ENCODE measurements at regions of chr2 and their contacts with region 1.

Region 1: DNA sequence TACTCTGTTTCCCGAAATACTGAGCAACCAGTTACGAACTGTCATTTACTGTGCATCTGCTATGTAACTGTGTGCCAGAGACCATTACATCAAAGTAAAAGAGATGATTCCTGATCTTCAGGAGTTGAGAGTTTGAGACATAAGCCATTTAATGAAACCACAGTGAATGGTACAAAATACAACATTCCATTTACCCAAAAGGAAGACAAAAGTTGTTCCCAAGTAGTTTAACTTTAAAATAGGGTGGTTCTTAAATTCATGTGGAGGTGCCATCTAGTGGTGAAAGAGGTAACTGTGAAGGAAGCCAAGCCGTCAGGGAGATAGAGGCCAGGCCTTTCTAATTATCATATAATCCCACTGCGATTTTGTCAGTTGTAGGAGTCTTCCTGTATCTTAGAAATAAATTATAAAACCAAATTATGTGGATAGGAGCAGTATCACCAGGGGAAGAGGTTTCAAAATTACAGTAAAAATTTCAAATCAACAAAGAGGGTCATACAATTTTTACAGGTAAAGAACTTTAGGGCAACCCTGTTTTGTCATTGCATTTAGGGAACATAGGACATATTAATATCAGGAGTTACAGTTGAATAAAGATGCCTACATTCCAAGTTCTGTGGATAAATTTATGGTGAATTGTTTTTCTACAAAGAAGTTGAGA is 67.7 kb downstream of the EPAS1 start:
- DNase-seq: peak; percentile 27 to 32
- H3K4me3 ChIP-seq: no peak overlapping the region
- H3K27ac ChIP-seq: no peak overlapping the region
- H3K4me1 ChIP-seq: peaks cover 0 to 2% of the 10 kb centered on the region in 2 donors
- H3K27me3 ChIP-seq: no peaks in the 10 kb centered on the region
- CTCF ChIP-seq: peak; percentile 45 to 80 (median 76)
- POLR2A ChIP-seq: no peak

Region 2: GRCh38 chr2:46010925-46011490 is 353.9 kb before region 1 on chr2:
- intact Hi-C with region 1: loop called (anchors 10 kb)
- DNase-seq: no peak
- H3K4me3 ChIP-seq: no peak overlapping the region
- H3K27ac ChIP-seq: no peak overlapping the region
- H3K4me1 ChIP-seq: peaks cover 16 to 29% of the 10 kb centered on the region in 2 donors
- H3K27me3 ChIP-seq: no peaks in the 10 kb centered on the region
- CTCF ChIP-seq: peak; percentile 14 to 76 (median 57)
- POLR2A ChIP-seq: no peak

Region 3: DNA sequence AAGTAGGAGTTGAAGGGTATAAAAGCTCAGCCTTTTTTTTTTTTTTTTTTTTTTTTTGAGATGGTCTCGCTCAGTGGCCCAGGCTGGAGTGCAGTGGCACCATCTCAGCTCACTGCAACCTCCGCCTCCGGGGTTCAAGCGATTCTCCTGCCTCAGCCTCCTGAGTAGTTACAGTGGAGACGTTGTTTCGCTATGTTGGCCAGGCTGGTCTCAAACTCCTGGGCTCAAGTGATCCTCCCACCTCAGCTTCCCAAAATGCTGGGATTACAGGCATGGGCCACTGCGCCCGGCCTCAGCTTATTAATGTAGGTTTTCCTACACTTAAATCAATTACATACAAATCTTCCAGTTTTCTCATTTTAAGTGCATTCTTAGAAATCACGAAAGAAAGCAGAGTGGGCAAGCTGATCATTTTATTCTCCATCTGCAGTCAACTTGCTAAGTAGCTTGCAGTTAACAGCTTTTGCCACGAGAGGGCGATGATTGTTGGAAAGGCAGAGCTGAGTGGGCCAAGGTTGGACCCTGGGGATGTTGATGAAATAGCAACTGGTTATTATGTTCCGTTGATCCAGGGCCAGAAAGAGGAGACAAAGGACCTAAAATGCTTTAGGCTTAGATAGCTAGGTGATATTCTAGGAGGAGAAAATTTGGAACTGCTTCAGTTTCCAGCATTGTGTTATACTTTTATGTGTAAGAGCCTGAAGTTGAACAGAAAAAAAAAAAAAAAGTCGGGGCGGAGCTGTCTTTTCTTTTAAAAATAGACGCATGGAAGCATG is 302.1 kb before region 1 on chr2:
- intact Hi-C with region 1: loop called (anchors 5 kb)
- DNase-seq: peak; percentile 80 to 84
- H3K4me3 ChIP-seq: no peak overlapping the region
- H3K27ac ChIP-seq: peak overlapping the region in 1 of 3 donors; percentile 44
- H3K4me1 ChIP-seq: peaks cover 10 to 11% of the 10 kb centered on the region in 2 donors
- H3K27me3 ChIP-seq: no peaks in the 10 kb centered on the region
- CTCF ChIP-seq: peak; percentile 65 to 90 (median 80)
- POLR2A ChIP-seq: no peak

Region 4: GRCh38 chr2:46296840-46297545 is 67.9 kb before region 1 on chr2 and contains the start of gene EPAS1:
- intact Hi-C with region 1: loop called (anchors 5 kb)
- DNase-seq: peak; percentile 93 to 94
- H3K4me3 ChIP-seq: peak within 1 kb of the TSS; percentile 34 to 95 (median 63)
- H3K27ac ChIP-seq: peak within 1 kb of the TSS; percentile 97 to 98 (median 98)
- H3K4me1 ChIP-seq: peaks cover 12 to 13% of the 10 kb centered on the region in 2 donors
- H3K27me3 ChIP-seq: no peaks in the 10 kb centered on the region
- CTCF ChIP-seq: peak in 1 of 6 experiments; percentile 1
- POLR2A ChIP-seq: peak; percentile 80 to 96
- total RNA-seq, gene EPAS1: 124 to 563 (median 182) TPM